ENCODE measurements at regions of chr4 and their contacts with region 1.

Region 1: DNA sequence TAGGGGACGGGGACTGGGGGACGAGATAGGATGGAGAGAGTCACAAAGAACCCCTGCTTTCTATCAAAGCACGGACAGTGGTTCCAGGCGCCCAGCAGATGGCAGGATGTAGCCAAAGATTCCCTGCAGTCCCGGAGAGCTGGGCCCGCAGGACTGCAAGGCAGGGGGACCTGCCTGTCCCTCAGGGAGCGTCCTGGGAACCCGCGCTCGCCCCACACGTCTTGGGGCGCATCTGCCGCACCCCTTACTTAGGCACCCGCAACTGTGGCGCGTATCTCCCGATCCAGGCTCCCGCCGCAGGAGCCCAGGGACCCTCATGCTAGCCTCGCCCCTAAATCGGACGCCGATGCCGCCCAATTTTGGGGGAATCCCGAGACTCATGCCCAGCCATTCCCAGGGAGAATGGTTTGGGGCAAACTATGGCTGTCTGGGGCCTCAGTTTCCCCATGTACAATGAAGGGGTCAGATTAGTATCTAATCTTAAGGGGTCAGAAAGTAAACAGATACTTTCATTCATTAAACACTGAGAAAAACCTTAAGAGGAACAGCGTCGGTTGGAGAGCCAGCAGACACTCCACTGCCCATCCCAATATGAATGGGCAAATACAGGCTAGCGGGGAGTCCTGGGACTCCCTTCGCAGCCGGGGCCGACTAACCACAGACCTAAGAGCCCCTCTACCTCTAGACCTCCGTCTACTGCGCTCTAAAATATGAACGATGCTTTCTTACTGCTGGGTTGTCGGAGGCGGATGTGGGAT is 581 bp upstream of the STK32B start:
- DNase-seq: peak; percentile 91
- H3K4me3 ChIP-seq: peak overlapping the region; percentile 62
- H3K27ac ChIP-seq: peak overlapping the region; percentile 49
- H3K4me1 ChIP-seq: peaks cover 5% of the 10 kb centered on the region
- H3K27me3 ChIP-seq: peaks cover 5% of the 10 kb centered on the region
- CTCF ChIP-seq: peak; percentile 87

Region 2: GRCh38 chr4:5037553-5038551 is 12.8 kb before region 1 on chr4:
- CTCF ChIA-PET with region 1: no interaction called
- POLR2A ChIA-PET with region 1: interaction called, 18 read pairs
- intact Hi-C with region 1: no loop called
- DNase-seq: peak; percentile 69
- H3K4me3 ChIP-seq: no peak overlapping the region
- H3K27ac ChIP-seq: no peak overlapping the region
- H3K4me1 ChIP-seq: peaks cover 25% of the 10 kb centered on the region
- H3K27me3 ChIP-seq: no peaks in the 10 kb centered on the region
- CTCF ChIP-seq: no peak

Region 3: DNA sequence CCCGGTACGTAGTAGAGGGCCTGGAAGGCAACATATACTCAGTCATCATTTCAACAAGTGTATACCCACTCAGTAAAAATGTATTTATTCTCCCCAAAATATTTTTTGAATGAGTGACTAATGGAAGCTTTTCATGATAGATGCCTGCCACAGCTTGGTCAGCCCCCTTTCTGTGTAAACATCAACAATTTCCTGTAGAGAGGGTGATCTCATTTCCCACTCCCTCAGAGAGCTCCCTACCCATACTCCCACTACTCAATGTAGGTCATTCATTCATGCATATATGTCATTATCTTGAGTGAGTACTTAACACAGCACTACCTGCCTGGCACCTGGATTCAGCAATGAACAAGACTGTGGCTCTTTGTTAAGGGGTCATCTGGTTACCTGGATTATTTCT is 82.5 kb after region 1 on chr4:
- CTCF ChIA-PET with region 1: no interaction called
- POLR2A ChIA-PET with region 1: no interaction called
- intact Hi-C with region 1: no loop called
- DNase-seq: no peak
- H3K4me3 ChIP-seq: no peak overlapping the region
- H3K27ac ChIP-seq: no peak overlapping the region
- H3K4me1 ChIP-seq: no peaks in the 10 kb centered on the region
- H3K27me3 ChIP-seq: no peaks in the 10 kb centered on the region
- CTCF ChIP-seq: no peak

Region 4: DNA sequence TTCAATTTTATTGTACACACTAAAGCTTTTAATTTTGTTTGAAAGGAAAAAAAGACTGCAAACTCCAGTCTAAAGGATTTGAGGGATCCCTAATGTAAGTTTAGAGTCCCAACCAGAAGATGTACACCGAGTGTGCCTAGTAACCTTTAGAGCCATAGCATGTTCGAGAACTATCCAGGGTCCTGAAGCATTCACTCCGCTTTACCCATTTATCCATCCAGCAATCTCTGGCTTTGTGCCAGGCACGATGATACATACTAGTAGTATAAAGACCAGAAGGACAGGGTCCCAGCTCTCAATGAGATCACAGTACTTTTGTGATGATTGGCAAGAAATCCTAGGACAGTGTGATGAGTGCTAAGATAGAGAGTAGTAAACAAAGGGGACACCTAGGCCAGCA is 169.3 kb after region 1 on chr4:
- CTCF ChIA-PET with region 1: no interaction called
- POLR2A ChIA-PET with region 1: no interaction called
- intact Hi-C with region 1: loop called (anchors 10 kb)
- DNase-seq: peak; percentile 78
- H3K4me3 ChIP-seq: no peak overlapping the region
- H3K27ac ChIP-seq: no peak overlapping the region
- H3K4me1 ChIP-seq: peaks cover 25% of the 10 kb centered on the region
- H3K27me3 ChIP-seq: no peaks in the 10 kb centered on the region
- CTCF ChIP-seq: no peak

Region 5: GRCh38 chr4:5460116-5460801 is 409.6 kb after region 1 on chr4:
- CTCF ChIA-PET with region 1: interaction called, 19 read pairs
- POLR2A ChIA-PET with region 1: no interaction called
- intact Hi-C with region 1: loop called (anchors 1 kb)
- DNase-seq: peak; percentile 52
- H3K4me3 ChIP-seq: no peak overlapping the region
- H3K27ac ChIP-seq: no peak overlapping the region
- H3K4me1 ChIP-seq: no peaks in the 10 kb centered on the region
- H3K27me3 ChIP-seq: no peaks in the 10 kb centered on the region
- CTCF ChIP-seq: peak; percentile 77

Region 6: GRCh38 chr4:5791654-5792053 is 741.0 kb after region 1 on chr4:
- CTCF ChIA-PET with region 1: interaction called, 7 read pairs
- POLR2A ChIA-PET with region 1: no interaction called
- intact Hi-C with region 1: loop called (anchors 2 kb)
- DNase-seq: no peak
- H3K4me3 ChIP-seq: no peak overlapping the region
- H3K27ac ChIP-seq: no peak overlapping the region
- H3K4me1 ChIP-seq: no peaks in the 10 kb centered on the region
- H3K27me3 ChIP-seq: no peaks in the 10 kb centered on the region
- CTCF ChIP-seq: no peak

Region 7: GRCh38 chr4:5979976-5980375 is 929.3 kb after region 1 on chr4:
- CTCF ChIA-PET with region 1: no interaction called
- POLR2A ChIA-PET with region 1: no interaction called
- intact Hi-C with region 1: loop called (anchors 5 kb)
- DNase-seq: peak; percentile 77
- H3K4me3 ChIP-seq: peak overlapping the region; percentile 9
- H3K27ac ChIP-seq: no peak overlapping the region
- H3K4me1 ChIP-seq: peaks cover 23% of the 10 kb centered on the region
- H3K27me3 ChIP-seq: no peaks in the 10 kb centered on the region
- CTCF ChIP-seq: peak; percentile 80